ENCODE measurements at regions of chr10 and their contacts with region 1.

Region 1: DNA sequence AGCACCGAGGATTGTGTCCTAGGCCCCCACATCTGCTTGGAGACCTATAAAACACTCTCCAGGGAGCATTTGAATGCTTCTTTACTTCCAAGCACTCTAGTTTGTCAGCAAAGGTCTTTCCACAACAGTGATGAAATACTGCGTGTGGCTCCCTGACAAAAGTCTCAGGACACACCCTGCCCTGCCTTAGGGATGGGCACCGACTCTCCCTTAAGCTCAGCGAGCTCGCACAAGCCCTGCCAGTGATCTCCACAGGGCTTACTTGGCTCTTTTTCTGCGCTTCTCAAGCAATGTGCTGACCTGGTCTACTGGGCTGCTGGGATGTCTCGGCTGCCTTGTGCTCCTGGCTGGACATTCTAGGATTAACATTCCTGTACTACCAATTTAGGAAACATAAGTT is 84.3 kb upstream of the MPP7 start:
- DNase-seq: no peak
- ATAC-seq: no peak
- H3K4me3 ChIP-seq: no peak overlapping the region
- H3K27ac ChIP-seq: no peak overlapping the region
- H3K4me1 ChIP-seq: no peaks in the 10 kb centered on the region
- H3K27me3 ChIP-seq: no peaks in the 10 kb centered on the region

Region 2: DNA sequence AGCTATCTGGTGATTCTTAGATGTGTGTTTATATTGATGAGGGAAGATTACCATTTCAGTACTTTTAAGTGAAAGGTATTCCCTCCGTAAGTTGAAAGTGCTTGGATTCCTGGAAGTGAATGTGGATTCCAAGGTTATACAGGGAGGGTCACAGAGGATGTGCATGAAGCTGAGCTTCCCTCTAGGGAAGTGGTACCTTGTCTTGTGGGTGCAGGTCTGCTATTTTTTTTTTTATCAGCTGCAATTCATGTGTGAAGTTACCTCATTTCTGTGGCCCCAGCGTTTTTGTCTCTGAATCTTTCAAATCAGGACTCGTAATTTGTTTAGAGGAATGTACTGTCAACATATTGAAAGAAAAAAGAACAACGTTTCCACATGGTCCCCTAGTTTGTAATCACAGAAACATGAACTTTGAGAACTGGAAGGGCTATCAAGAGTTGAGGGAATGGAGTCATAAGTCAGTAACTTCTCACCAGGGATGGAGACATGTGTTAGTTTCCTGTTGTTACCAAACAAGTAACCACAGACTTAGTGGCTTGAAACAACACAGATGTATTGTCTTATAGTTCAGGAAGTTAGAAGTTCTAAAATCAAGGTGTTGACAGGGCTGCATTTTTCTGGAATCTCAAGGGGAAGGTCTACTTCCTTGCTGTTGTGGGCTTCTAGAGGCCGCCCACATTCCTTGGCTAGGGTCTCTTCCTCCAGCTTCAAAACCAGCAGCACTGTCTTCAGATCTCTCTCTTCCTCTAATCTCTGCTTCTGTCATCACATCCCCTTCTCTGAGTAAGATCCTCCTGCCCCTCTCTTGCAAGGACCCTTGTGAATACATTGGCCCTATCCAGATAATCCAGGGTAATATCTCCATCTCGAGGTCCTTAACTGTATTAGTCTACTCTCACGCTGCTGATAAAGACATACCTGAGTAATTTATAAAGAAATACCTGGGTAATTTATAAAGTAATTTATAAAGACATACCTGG is 818.7 kb before region 1 on chr10:
- intact Hi-C with region 1: no loop called
- DNase-seq: no peak
- ATAC-seq: no peak
- H3K4me3 ChIP-seq: no peak overlapping the region
- H3K27ac ChIP-seq: no peak overlapping the region
- H3K4me1 ChIP-seq: no peaks in the 10 kb centered on the region
- H3K27me3 ChIP-seq: no peaks in the 10 kb centered on the region

Region 3: DNA sequence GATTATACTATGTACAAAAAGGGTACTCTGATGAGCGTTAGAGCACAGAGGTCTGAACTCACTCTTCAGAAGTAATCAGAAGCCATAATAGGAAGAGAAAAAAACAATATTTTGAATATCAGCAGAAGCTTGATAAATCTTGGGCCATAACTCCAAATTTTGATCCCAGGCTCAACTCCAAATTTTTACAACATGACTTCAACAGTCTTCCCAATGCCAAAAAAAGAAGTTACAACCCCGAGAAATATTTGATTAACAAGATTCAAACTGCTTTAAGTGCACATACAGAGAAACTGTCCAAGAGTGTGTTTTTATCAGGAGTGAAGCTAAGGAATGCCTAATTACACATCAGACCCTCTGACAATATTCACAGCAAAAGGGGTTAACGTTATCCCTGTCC is 91.8 kb before region 1 on chr10:
- intact Hi-C with region 1: loop called in 2 of 4 experiments (anchors 5 kb)
- DNase-seq: no peak
- ATAC-seq: peak in 1 of 2 donors; percentile 27
- H3K4me3 ChIP-seq: no peak overlapping the region
- H3K27ac ChIP-seq: no peak overlapping the region
- H3K4me1 ChIP-seq: peaks cover 6% of the 10 kb centered on the region
- H3K27me3 ChIP-seq: no peaks in the 10 kb centered on the region